HepG2 (cell line): ENCODE measurements at regions of chr6 and their contacts with region 1.

Region 1: GRCh38 chr6:154460306-154461071 is 50.0 kb downstream of the CNKSR3 start:
- DNase-seq: peak; percentile 95
- ATAC-seq: peak; percentile 92
- H3K4me3 ChIP-seq: peak overlapping the region; percentile 22 to 59 (median 34); a peak in 5 of 6 replicates
- H3K27ac ChIP-seq: peak overlapping the region; percentile 81
- H3K4me1 ChIP-seq: peaks cover 72% of the 10 kb centered on the region
- H3K27me3 ChIP-seq: no peaks in the 10 kb centered on the region
- CTCF ChIP-seq: no peak
- EP300 ChIP-seq: peak in 1 of 2 experiments; percentile 93; a peak in 2 of 4 replicates
- POLR2A ChIP-seq: peak in 1 of 2 experiments; percentile 23; a peak in 1 of 4 replicates
- RAD21 ChIP-seq: peak; percentile 21

Region 2: DNA sequence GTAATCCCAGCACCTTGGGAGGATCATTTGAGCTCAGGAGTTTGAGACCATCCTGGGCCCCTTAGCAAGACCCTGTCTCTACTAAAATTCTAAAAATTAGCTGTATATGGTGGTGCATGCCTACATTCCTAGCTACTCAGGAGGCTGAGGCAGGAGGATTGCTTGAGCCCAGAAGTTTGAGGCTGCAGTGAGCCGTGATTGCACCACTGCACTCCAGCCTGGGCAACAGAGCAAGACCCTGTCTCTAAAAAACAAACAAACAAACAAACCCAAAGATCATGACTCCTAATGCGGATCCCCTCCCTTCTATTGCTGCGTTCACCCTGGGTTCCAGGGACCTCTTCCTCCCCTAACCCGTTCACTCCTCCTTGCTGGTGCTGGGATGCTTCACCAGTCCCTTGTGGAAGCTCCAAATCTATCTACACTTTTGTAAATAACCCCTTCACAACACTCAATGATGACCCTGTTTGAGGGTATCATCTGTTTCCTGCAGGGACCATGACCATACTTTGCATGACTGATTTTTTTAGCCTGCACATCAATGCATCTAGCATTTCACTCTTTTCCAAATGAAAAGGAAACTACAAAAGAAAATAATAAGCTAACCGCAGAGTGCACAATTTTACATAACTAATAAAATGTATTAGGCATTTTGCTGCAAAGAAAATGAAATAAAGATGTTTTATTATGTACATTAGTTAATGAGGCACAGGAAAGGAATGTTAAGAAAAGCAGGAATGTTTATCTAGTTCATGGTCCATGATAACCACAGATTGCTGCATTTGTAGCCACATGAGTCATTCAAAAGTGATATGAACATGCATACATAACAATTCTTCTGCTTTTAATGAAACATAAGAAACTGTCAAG is 73.4 kb before region 1 on chr6:
- CTCF ChIA-PET with region 1: no interaction called
- POLR2A ChIA-PET with region 1: no interaction called
- in situ Hi-C with region 1: no loop called
- intact Hi-C with region 1: loop called (anchors 1 kb)
- DNase-seq: peak; percentile 87
- ATAC-seq: peak; percentile 74
- H3K4me3 ChIP-seq: no peak overlapping the region
- H3K27ac ChIP-seq: no peak overlapping the region
- H3K4me1 ChIP-seq: peaks cover 21% of the 10 kb centered on the region
- H3K27me3 ChIP-seq: no peaks in the 10 kb centered on the region
- CTCF ChIP-seq: no peak
- EP300 ChIP-seq: peak in 1 of 2 experiments; percentile 39; a peak in 2 of 4 replicates
- POLR2A ChIP-seq: no peak
- RAD21 ChIP-seq: peak; percentile 23; the same call in 1 of the 2 replicates

Region 3: GRCh38 chr6:154448448-154449096 is 11.9 kb before region 1 on chr6:
- CTCF ChIA-PET with region 1: no interaction called
- POLR2A ChIA-PET with region 1: interaction called, 6 read pairs
- in situ Hi-C with region 1: no loop called
- intact Hi-C with region 1: loop called (anchors 1 kb)
- DNase-seq: no peak
- ATAC-seq: peak; percentile 88
- H3K4me3 ChIP-seq: no peak overlapping the region
- H3K27ac ChIP-seq: no peak overlapping the region
- H3K4me1 ChIP-seq: peaks cover 11% of the 10 kb centered on the region
- H3K27me3 ChIP-seq: no peaks in the 10 kb centered on the region
- CTCF ChIP-seq: no peak
- EP300 ChIP-seq: no peak
- POLR2A ChIP-seq: no peak
- RAD21 ChIP-seq: no peak